MCF 10A (cell line): ENCODE measurements at regions of chr20 and their contacts with region 1.

Region 1: GRCh38 chr20:46681032-46681854 is 8.0 kb downstream of the TP53RK start:
- DNase-seq: peak; percentile 70
- H3K4me3 Mint-ChIP-seq: no peak overlapping the region
- H3K27ac Mint-ChIP-seq: no peak overlapping the region
- H3K4me1 Mint-ChIP-seq: peaks cover 16% of the 10 kb centered on the region
- H3K27me3 Mint-ChIP-seq: no peaks in the 10 kb centered on the region
- CTCF ChIP-seq: peak; percentile 78

Region 2: GRCh38 chr20:46670585-46671584 is 10.4 kb before region 1 on chr20:
- CTCF ChIA-PET with region 1: interaction called, 23 read pairs
- POLR2A ChIA-PET with region 1: interaction called, 3 read pairs
- intact Hi-C with region 1: no loop called
- DNase-seq: no peak
- H3K4me3 Mint-ChIP-seq: no peak overlapping the region
- H3K27ac Mint-ChIP-seq: no peak overlapping the region
- H3K4me1 Mint-ChIP-seq: no peaks in the 10 kb centered on the region
- H3K27me3 Mint-ChIP-seq: no peaks in the 10 kb centered on the region
- CTCF ChIP-seq: no peak